Caco-2 (cell line): ENCODE measurements at regions of chr1 and their contacts with region 1.

Region 1: DNA sequence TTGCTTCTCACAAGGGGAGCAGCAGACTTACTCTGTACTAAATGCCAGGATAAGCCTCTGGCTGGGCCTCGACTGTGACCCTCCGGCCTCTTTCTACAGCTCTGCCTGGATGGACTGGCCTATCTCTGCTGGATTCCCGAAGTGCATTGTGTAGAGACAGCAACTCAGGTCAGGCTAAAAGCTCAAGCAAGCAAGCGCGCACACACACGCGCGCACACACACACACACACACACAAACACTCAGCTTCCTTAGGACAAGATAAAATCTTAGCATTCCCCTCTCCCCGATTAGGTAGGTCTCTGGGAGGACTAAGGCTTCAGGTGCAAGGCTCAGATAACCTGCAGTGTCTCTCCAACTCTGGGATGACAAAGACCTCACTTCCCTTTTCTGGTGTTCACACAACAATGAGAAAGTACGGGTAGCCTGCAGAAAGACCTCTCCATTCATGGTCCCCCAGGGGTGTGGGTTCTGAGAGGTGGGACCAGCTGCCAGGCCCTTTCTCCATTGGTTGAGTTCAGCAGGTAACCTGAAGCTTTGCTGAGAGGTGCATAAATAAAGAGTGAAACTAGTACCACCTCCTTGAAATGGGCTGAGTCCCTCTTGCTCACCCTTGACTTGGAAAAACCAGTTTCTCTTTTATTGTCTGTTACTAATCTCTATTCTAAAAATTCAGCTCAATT is 155.1 kb upstream of the CAMK1G start:
- DNase-seq: peak; percentile 50 to 76
- H3K4me3 ChIP-seq: no peak overlapping the region
- H3K4me3 Mint-ChIP-seq: peak overlapping the region; percentile 78
- H3K27ac Mint-ChIP-seq: peak overlapping the region; percentile 91
- H3K4me1 ChIP-seq: peaks cover 59% of the 10 kb centered on the region
- H3K4me1 Mint-ChIP-seq: peaks cover 58% of the 10 kb centered on the region
- H3K27me3 ChIP-seq: no peaks in the 10 kb centered on the region
- H3K27me3 Mint-ChIP-seq: no peaks in the 10 kb centered on the region
- CTCF ChIP-seq: no peak

Region 2: GRCh38 chr1:209411491-209411929 is 16.9 kb before region 1 on chr1:
- CTCF ChIA-PET with region 1: interaction called, 3 read pairs
- POLR2A ChIA-PET with region 1: interaction called, 4 read pairs
- intact Hi-C with region 1: loop called (anchors 2 kb)
- DNase-seq: no peak
- H3K4me3 ChIP-seq: no peak overlapping the region
- H3K4me3 Mint-ChIP-seq: peak overlapping the region; percentile 21
- H3K27ac Mint-ChIP-seq: peak overlapping the region; percentile 50
- H3K4me1 ChIP-seq: peaks cover 52% of the 10 kb centered on the region
- H3K4me1 Mint-ChIP-seq: peaks cover 23% of the 10 kb centered on the region
- H3K27me3 ChIP-seq: no peaks in the 10 kb centered on the region
- H3K27me3 Mint-ChIP-seq: no peaks in the 10 kb centered on the region
- CTCF ChIP-seq: no peak

Region 3: DNA sequence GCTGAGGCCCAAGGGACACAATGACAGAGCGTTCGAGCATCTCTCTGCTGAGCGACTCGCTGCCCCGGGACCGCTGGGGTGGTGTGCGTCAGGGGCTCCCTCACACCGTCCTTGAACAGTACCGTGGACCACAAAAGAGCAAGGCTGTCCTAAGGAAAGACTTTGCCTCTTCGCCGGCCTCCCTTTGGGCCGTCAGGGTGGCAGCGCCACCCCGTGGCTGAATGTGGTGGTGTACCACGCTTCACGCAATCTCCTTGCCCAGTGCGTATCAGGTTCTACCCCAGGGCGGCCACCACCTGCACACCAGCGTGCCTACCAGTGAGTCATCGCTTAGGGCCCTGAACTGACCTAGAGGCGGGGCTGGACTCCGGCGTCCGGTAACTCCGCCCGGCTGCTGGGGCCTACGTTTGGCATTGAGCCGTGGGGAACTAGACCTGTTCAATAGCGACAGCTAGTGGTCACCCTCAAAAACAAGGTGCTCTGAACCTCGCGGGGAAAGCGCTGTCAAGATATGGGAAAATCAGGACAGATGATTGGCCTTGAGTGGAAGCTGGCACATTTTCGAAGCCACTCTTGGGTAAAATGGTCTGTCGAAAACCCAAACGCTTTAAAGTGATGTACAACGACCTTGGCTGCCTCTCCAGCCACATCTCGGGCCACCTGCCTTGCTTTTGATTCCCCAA is 319.3 kb after region 1 on chr1:
- CTCF ChIA-PET with region 1: no interaction called
- POLR2A ChIA-PET with region 1: no interaction called
- intact Hi-C with region 1: no loop called
- DNase-seq: peak; percentile 93 to 96
- H3K4me3 ChIP-seq: no peak overlapping the region
- H3K4me3 Mint-ChIP-seq: peak overlapping the region; percentile 51
- H3K27ac Mint-ChIP-seq: peak overlapping the region; percentile 53
- H3K4me1 ChIP-seq: peaks cover 19% of the 10 kb centered on the region
- H3K4me1 Mint-ChIP-seq: peaks cover 16% of the 10 kb centered on the region
- H3K27me3 ChIP-seq: no peaks in the 10 kb centered on the region
- H3K27me3 Mint-ChIP-seq: no peaks in the 10 kb centered on the region
- CTCF ChIP-seq: peak; percentile 62 to 83